Upper lobe of right lung (tissue), 1 donor: ENCODE measurements at regions of chr7 and their contacts with region 1.

Region 1: GRCh38 chr7:98294796-98295382 is 13.4 kb downstream of the BRI3 start:
- DNase-seq: peak; percentile 77
- ATAC-seq: peak; percentile 77
- H3K4me3 ChIP-seq: no peak overlapping the region
- H3K27ac ChIP-seq: no peak overlapping the region
- H3K4me1 ChIP-seq: no peaks in the 10 kb centered on the region
- H3K27me3 ChIP-seq: no peaks in the 10 kb centered on the region
- CTCF ChIP-seq: peak; percentile 55

Region 2: DNA sequence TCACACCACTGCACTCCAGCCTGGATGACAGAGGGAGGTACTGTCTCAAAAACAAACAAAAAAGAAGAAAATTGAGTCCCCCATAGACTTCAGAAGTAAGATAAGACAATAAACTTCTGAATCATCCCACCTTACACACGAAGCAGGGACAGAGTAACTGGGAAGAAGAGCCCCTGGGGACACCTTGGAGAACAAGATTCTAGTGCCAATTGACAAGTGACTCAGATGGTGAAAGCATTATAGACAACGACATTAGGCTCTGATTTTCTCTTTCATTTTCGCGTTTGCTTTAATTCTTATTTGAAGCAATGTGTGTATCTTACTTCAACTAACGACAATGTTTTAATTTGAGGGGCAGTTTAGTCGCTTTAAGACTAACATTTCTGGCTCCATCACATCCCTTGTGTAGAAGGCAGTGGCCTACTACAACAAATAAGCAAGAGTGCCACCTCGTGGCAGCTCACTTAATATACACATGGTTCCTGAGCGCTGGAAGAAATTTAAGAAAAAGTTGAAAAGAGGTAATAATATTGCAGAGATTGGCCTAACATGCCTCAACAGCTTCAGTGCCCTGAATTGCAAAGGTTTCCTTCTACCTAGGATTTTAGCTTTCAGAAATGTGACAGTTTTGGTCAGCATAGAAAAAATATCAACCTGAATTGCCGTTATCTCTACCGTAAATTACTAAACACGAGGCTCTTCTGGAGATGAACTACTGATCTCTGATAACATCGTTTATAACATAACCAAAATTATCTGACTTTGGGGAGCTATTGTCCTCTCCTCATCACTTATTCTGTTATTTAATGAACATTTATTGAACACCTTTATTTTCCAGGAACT is 459.4 kb before region 1 on chr7:
- intact Hi-C with region 1: no loop called
- DNase-seq: no peak
- ATAC-seq: peak; percentile 86
- H3K4me3 ChIP-seq: no peak overlapping the region
- H3K27ac ChIP-seq: no peak overlapping the region
- H3K4me1 ChIP-seq: no peaks in the 10 kb centered on the region
- H3K27me3 ChIP-seq: peaks cover 7% of the 10 kb centered on the region
- CTCF ChIP-seq: peak; percentile 69

Region 3: GRCh38 chr7:98400542-98401340 is 105.9 kb after region 1 on chr7 and contains the start of gene BAIAP2L1:
- intact Hi-C with region 1: loop called (anchors 10 kb)
- DNase-seq: peak; percentile 96
- ATAC-seq: peak; percentile 98
- H3K4me3 ChIP-seq: peak within 1 kb of the TSS; percentile 61
- H3K27ac ChIP-seq: peak within 1 kb of the TSS; percentile 74
- H3K4me1 ChIP-seq: peaks cover 4% of the 10 kb centered on the region
- H3K27me3 ChIP-seq: no peaks in the 10 kb centered on the region
- CTCF ChIP-seq: no peak
- total RNA-seq, gene BAIAP2L1: 22.9 TPM